Lower leg skin (tissue), 4 donors: ENCODE measurements at regions of chr11 and their contacts with region 1.

Region 1: GRCh38 chr11:83599066-83599465 is 312.9 kb upstream of the CCDC90B start:
- DNase-seq: no peak
- H3K4me3 ChIP-seq: no peak overlapping the region
- CTCF ChIP-seq: no peak
- POLR2A ChIP-seq: no peak

Region 2: GRCh38 chr11:82640053-82640452 is 959.0 kb before region 1 on chr11:
- intact Hi-C with region 1: loop called (anchors 10 kb)
- DNase-seq: no peak
- H3K4me3 ChIP-seq: no peak overlapping the region
- CTCF ChIP-seq: no peak
- POLR2A ChIP-seq: no peak

Region 3: GRCh38 chr11:83648610-83649527 is 49.8 kb after region 1 on chr11:
- intact Hi-C with region 1: no loop called
- DNase-seq: no peak
- H3K4me3 ChIP-seq: no peak overlapping the region
- CTCF ChIP-seq: no peak
- POLR2A ChIP-seq: no peak

Region 4: GRCh38 chr11:84249344-84250136 is 650.5 kb after region 1 on chr11:
- intact Hi-C with region 1: no loop called
- DNase-seq: no peak
- H3K4me3 ChIP-seq: no peak overlapping the region
- CTCF ChIP-seq: no peak
- POLR2A ChIP-seq: no peak